Spleen (tissue), 13 donors: ENCODE measurements at regions of chr14 and their contacts with region 1.

Region 1: DNA sequence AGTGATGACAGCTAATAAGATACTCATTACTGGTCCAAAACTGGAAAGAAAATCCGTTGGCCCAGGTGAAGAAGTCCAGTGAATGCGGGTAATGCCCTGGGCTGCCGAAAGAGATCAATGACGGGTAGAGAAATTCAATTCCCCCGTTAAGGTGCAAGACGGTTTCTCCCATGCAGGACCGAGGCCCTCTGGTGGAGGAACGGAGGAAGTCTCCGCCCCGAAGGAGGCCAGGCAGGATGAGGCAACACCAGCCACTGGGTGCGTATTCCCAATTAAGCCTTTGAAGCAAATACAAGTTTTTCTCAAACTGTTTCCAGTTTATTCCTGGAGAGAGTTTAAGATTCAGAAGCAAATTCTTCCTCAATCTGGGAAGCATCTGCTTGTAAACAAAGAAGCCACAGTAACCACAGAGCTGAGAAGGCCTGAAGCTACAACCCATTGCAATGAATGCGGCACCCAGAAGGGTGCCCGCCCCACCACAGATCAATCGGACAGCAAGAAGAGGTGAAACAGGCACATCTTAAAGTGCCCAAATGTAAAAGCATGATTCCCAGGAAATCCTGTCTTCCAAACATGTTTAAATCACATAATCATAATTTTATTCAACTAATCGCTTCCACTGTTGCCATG is 118.5 kb downstream of the TTC7B start:
- DNase-seq: peak; percentile 92
- H3K4me3 ChIP-seq: no peak overlapping the region
- H3K27ac ChIP-seq: peak overlapping the region in 5 of 8 donors; percentile 2 to 64 (median 52)
- H3K4me1 ChIP-seq: peaks cover 8 to 48% (median 37%) of the 10 kb centered on the region in 6 donors
- H3K27me3 ChIP-seq: no peaks in the 10 kb centered on the region
- CTCF ChIP-seq: peak; percentile 79 to 97 (median 92)
- POLR2A ChIP-seq: no peak

Region 2: DNA sequence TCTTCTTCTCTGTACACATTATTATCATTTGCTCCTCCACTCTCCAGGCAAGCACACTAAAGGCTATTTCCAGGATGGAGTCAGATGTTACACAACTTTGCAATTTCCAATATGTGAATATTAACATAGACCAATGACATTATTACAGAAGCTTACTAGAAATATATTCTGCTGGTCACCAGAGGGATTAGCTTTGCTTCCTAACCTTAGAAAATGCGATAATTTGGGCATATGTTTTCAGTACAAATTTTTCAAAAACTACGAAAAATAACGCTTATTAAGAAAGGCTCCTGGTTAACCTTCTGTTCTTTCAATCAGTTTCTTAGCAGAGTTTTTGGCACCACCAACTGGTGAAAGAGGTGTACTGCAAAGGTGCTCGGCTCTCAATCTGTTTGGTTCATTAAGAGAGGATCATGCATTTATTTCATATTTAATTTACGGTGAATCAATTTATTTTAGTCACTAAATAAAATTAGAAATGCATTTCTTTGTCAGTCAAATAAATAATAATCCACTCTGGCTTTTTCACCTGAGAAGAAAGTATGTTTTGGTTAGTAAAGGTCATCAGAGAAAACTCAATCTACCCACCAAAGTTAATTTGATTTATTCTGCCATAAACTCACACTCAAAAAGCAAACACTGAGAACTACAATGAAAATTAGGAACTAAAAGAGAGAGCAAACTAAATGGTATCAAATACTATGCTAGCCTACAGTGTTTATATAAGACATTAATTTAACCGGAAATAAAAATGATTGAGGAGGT is 782.4 kb before region 1 on chr14:
- intact Hi-C with region 1: no loop called
- DNase-seq: no peak
- H3K4me3 ChIP-seq: no peak overlapping the region
- H3K27ac ChIP-seq: no peak overlapping the region
- H3K4me1 ChIP-seq: peaks cover 0 to 25% (median 5%) of the 10 kb centered on the region in 6 donors
- H3K27me3 ChIP-seq: no peaks in the 10 kb centered on the region
- CTCF ChIP-seq: peak; percentile 78 to 93 (median 89)
- POLR2A ChIP-seq: no peak

Region 3: GRCh38 chr14:90301668-90302090 is 396.0 kb before region 1 on chr14:
- intact Hi-C with region 1: loop called (anchors 5 kb)
- DNase-seq: no peak
- H3K4me3 ChIP-seq: no peak overlapping the region
- H3K27ac ChIP-seq: peak overlapping the region in 4 of 8 donors; percentile 0 to 78 (median 55)
- H3K4me1 ChIP-seq: peaks cover 0 to 51% (median 18%) of the 10 kb centered on the region in 6 donors
- H3K27me3 ChIP-seq: no peaks in the 10 kb centered on the region
- CTCF ChIP-seq: peak in 9 of 11 experiments; percentile 19 to 54 (median 40)
- POLR2A ChIP-seq: no peak

Region 4: GRCh38 chr14:90399541-90400444 is 297.9 kb before region 1 on chr14:
- intact Hi-C with region 1: loop called (anchors 5 kb)
- DNase-seq: peak; percentile 95
- H3K4me3 ChIP-seq: peak overlapping the region; percentile 91 to 100 (median 100)
- H3K27ac ChIP-seq: peak overlapping the region; percentile 90 to 98 (median 95)
- H3K4me1 ChIP-seq: peaks cover 30 to 66% (median 55%) of the 10 kb centered on the region in 6 donors
- H3K27me3 ChIP-seq: no peaks in the 10 kb centered on the region
- CTCF ChIP-seq: peak; percentile 95 to 100 (median 99)
- POLR2A ChIP-seq: no peak

Region 5: GRCh38 chr14:90767899-90768298 is 70.2 kb after region 1 on chr14:
- intact Hi-C with region 1: no loop called
- DNase-seq: no peak
- H3K4me3 ChIP-seq: no peak overlapping the region
- H3K27ac ChIP-seq: no peak overlapping the region
- H3K4me1 ChIP-seq: peaks cover 0 to 4% (median 0%) of the 10 kb centered on the region in 6 donors
- H3K27me3 ChIP-seq: no peaks in the 10 kb centered on the region
- CTCF ChIP-seq: no peak
- POLR2A ChIP-seq: no peak